ENCODE measurements at regions of chr11 and their contacts with region 1.

Region 1: GRCh38 chr11:20647976-20648565 is 21.3 kb upstream of the NELL1 start:
- DNase-seq: peak; percentile 45
- H3K4me3 ChIP-seq: no peak overlapping the region
- H3K27ac ChIP-seq: no peak overlapping the region
- H3K4me1 ChIP-seq: no peaks in the 10 kb centered on the region
- H3K27me3 ChIP-seq: no peaks in the 10 kb centered on the region
- CTCF ChIP-seq: peak; percentile 84 to 93

Region 2: GRCh38 chr11:20563866-20564265 is 84.2 kb before region 1 on chr11:
- CTCF ChIA-PET with region 1: no interaction called
- dilution Hi-C with region 1: no loop called
- in situ Hi-C with region 1: no loop called
- intact Hi-C with region 1: no loop called
- DNase-seq: no peak
- H3K4me3 ChIP-seq: no peak overlapping the region
- H3K27ac ChIP-seq: no peak overlapping the region
- H3K4me1 ChIP-seq: peaks cover 39% of the 10 kb centered on the region
- H3K27me3 ChIP-seq: no peaks in the 10 kb centered on the region
- CTCF ChIP-seq: no peak

Region 3: GRCh38 chr11:20634044-20634443 is 14.0 kb before region 1 on chr11:
- CTCF ChIA-PET with region 1: no interaction called
- dilution Hi-C with region 1: no loop called
- in situ Hi-C with region 1: no loop called
- intact Hi-C with region 1: no loop called
- DNase-seq: no peak
- H3K4me3 ChIP-seq: no peak overlapping the region
- H3K27ac ChIP-seq: no peak overlapping the region
- H3K4me1 ChIP-seq: peaks cover 3% of the 10 kb centered on the region
- H3K27me3 ChIP-seq: no peaks in the 10 kb centered on the region
- CTCF ChIP-seq: peak; percentile 35 to 53

Region 4: DNA sequence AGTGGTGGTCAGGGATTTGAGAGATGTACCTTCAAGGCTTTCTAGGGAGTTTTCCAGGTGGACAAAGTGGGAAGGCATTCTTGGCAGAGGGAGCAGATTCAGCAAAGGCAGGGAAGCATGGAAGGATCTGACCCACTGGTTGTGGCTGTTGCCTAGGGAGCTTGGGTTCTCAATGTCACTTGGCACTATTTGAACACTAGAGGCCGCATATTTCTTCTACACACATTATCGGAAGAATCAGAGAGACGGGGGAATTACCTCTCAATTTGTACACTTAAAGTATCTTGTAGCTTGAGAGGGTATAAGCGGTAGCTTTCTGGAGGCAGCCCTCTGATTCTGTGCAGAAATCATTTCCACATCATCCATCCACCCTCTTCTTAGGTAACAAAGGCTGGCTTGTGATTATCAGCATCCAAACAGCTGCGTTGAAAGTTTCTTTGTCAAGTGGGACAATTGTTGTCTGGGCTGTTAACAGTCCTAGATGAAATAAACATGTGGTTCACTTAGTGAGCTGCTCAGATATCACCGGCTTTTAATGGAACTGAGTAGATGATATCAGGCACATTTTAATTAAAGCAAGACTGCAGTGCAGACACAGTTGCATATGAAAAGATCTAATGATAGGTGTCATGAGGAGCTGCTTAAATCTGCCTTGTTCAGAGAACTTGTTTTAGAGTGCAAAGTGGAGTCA is 23.9 kb after region 1 on chr11:
- CTCF ChIA-PET with region 1: no interaction called
- dilution Hi-C with region 1: no loop called
- in situ Hi-C with region 1: no loop called
- intact Hi-C with region 1: loop called (anchors 1 kb)
- DNase-seq: peak; percentile 6
- H3K4me3 ChIP-seq: no peak overlapping the region
- H3K27ac ChIP-seq: no peak overlapping the region
- H3K4me1 ChIP-seq: peaks cover 8% of the 10 kb centered on the region
- H3K27me3 ChIP-seq: peaks cover 39% of the 10 kb centered on the region
- CTCF ChIP-seq: peak; percentile 25 to 43

Region 5: DNA sequence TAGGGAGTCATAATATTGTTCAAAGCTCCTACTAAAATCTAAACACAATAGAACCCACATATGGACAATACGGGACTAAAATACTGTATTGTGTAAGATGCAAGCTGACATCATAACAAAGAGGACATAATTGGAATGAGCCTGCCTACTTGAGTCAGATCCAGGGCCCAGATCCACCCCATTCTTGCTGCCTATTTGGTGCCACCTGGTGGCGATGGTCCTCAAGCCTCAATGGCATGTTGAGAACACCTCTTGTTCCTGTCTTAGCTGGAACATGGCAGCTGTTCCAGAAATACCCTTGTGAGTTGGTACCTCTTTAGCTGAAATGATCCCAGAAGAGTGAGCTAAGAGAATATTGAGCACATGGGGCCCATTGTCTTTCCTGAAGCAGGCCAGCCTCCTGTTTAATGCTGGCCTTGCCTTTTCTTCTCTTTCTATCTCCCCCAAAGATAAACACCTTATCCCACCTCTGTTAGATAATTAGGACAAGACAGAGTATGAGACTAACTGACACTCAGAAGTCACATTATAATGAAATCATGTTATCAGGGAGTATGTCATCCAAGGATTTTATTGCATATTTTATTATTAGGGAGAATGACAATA is 863.9 kb after region 1 on chr11:
- CTCF ChIA-PET with region 1: no interaction called
- dilution Hi-C with region 1: no loop called
- in situ Hi-C with region 1: loop called (anchors 25 kb)
- intact Hi-C with region 1: loop called (anchors 1 kb)
- DNase-seq: peak; percentile 67
- H3K4me3 ChIP-seq: no peak overlapping the region
- H3K27ac ChIP-seq: no peak overlapping the region
- H3K4me1 ChIP-seq: no peaks in the 10 kb centered on the region
- H3K27me3 ChIP-seq: no peaks in the 10 kb centered on the region
- CTCF ChIP-seq: peak; percentile 68 to 80

Region 6: GRCh38 chr11:22130462-22131053 is 1482.5 kb after region 1 on chr11:
- CTCF ChIA-PET with region 1: no interaction called
- dilution Hi-C with region 1: no loop called
- in situ Hi-C with region 1: no loop called
- intact Hi-C with region 1: loop called (anchors 2 kb)
- DNase-seq: no peak
- H3K4me3 ChIP-seq: no peak overlapping the region
- H3K27ac ChIP-seq: no peak overlapping the region
- H3K4me1 ChIP-seq: no peaks in the 10 kb centered on the region
- H3K27me3 ChIP-seq: no peaks in the 10 kb centered on the region
- CTCF ChIP-seq: peak; percentile 41 to 52

Region 7: GRCh38 chr11:22304337-22304961 is 1656.4 kb after region 1 on chr11:
- CTCF ChIA-PET with region 1: no interaction called
- dilution Hi-C with region 1: no loop called
- in situ Hi-C with region 1: no loop called
- intact Hi-C with region 1: loop called (anchors 2 kb)
- DNase-seq: peak; percentile 12
- H3K4me3 ChIP-seq: no peak overlapping the region
- H3K27ac ChIP-seq: no peak overlapping the region
- H3K4me1 ChIP-seq: no peaks in the 10 kb centered on the region
- H3K27me3 ChIP-seq: no peaks in the 10 kb centered on the region
- CTCF ChIP-seq: peak; percentile 55 to 57

Measured in mammary epithelial cell (primary cell).